CD4-positive, alpha-beta T cell (primary cell): ENCODE measurements at regions of chr1 and their contacts with region 1.

Region 1: GRCh38 chr1:109493805-109494539 is at the start of gene CYB561D1:
- DNase-seq: peak; percentile 78 to 94 (median 88)
- ATAC-seq: peak; percentile 90
- H3K4me3 ChIP-seq: peak within 1 kb of the TSS; percentile 100
- H3K4me3 Mint-ChIP-seq: peak within 1 kb of the TSS; percentile 97
- H3K27ac ChIP-seq: peak within 1 kb of the TSS; percentile 59 to 66
- H3K27ac Mint-ChIP-seq: peak within 1 kb of the TSS; percentile 88
- H3K4me1 ChIP-seq: peaks cover 62% of the 10 kb centered on the region
- H3K4me1 Mint-ChIP-seq: peaks cover 54% of the 10 kb centered on the region
- H3K27me3 ChIP-seq: no peaks in the 10 kb centered on the region
- H3K27me3 Mint-ChIP-seq: no peaks in the 10 kb centered on the region
- CTCF ChIP-seq: peak; percentile 92
- total RNA-seq, gene CYB561D1: 12.0 to 15.0 TPM

Region 2: DNA sequence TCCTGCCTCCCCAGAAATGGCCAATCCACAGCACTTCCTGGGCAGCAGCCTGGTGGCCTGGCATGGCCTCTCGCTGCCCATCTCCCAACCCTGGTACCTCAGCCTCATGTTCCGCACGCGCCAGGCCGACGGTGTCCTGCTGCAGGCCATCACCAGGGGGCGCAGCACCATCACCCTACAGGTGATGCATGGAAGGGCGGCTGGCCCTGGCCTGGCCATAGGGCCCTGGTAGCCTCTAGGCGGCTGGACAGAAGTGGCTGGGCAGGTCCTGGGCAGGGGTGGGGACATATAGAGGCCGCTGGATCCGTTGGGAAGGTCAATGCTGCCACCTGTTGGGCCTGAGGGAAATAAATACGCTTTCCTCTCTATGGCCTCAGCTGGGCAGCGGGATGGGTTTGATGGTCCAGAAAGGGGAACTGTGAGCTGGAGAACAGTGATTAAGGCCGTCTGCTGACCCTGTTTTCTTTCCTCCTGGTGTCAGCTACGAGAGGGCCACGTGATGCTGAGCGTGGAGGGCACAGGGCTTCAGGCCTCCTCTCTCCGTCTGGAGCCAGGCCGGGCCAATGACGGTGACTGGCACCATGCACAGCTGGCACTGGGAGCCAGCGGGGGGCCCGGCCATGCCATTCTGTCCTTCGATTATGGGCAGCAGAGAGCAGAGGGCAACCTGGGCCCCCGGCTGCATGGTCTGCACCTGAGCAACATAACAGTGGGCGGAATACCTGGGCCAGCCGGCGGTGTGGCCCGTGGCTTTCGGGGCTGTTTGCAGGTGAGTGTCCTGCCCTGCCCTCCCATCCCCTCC is 230.2 kb before region 1 on chr1:
- CTCF ChIA-PET with region 1: no interaction called
- POLR2A ChIA-PET with region 1: no interaction called
- intact Hi-C with region 1: loop called in 1 of 2 experiments (anchors 5 kb)
- DNase-seq: peak; percentile 62 to 87 (median 71)
- ATAC-seq: peak; percentile 97
- H3K4me3 ChIP-seq: no peak overlapping the region
- H3K4me3 Mint-ChIP-seq: no peak overlapping the region
- H3K27ac ChIP-seq: no peak overlapping the region
- H3K27ac Mint-ChIP-seq: no peak overlapping the region
- H3K4me1 ChIP-seq: peaks cover 6% of the 10 kb centered on the region
- H3K4me1 Mint-ChIP-seq: no peaks in the 10 kb centered on the region
- H3K27me3 ChIP-seq: no peaks in the 10 kb centered on the region
- H3K27me3 Mint-ChIP-seq: no peaks in the 10 kb centered on the region
- CTCF ChIP-seq: peak; percentile 83

Region 3: GRCh38 chr1:109282952-109283747 is 210.8 kb before region 1 on chr1 and contains the start of gene PSRC1:
- CTCF ChIA-PET with region 1: interaction called, 6 read pairs
- POLR2A ChIA-PET with region 1: no interaction called
- intact Hi-C with region 1: loop called in 1 of 2 experiments (anchors 2 kb)
- DNase-seq: peak; percentile 81 to 94 (median 85)
- ATAC-seq: peak; percentile 93
- H3K4me3 ChIP-seq: peak within 1 kb of the TSS; percentile 70
- H3K4me3 Mint-ChIP-seq: peak within 1 kb of the TSS; percentile 94
- H3K27ac ChIP-seq: peak within 1 kb of the TSS; percentile 31 to 59
- H3K27ac Mint-ChIP-seq: peak within 1 kb of the TSS; percentile 78
- H3K4me1 ChIP-seq: peaks cover 27% of the 10 kb centered on the region
- H3K4me1 Mint-ChIP-seq: peaks cover 19% of the 10 kb centered on the region
- H3K27me3 ChIP-seq: no peaks in the 10 kb centered on the region
- H3K27me3 Mint-ChIP-seq: no peaks in the 10 kb centered on the region
- CTCF ChIP-seq: peak; percentile 71
- total RNA-seq, gene PSRC1: 0.22 to 0.91 TPM

Region 4: GRCh38 chr1:109426278-109427170 is 67.4 kb before region 1 on chr1 and contains the start of gene PSMA5:
- CTCF ChIA-PET with region 1: interaction called, 9 read pairs
- POLR2A ChIA-PET with region 1: interaction called, 15 read pairs
- intact Hi-C with region 1: no loop called
- DNase-seq: peak; percentile 87 to 99 (median 92)
- ATAC-seq: peak; percentile 91
- H3K4me3 ChIP-seq: peak within 1 kb of the TSS; percentile 98
- H3K4me3 Mint-ChIP-seq: peak within 1 kb of the TSS; percentile 98
- H3K27ac ChIP-seq: peak within 1 kb of the TSS; percentile 91 to 95
- H3K27ac Mint-ChIP-seq: peak within 1 kb of the TSS; percentile 98
- H3K4me1 ChIP-seq: peaks cover 33% of the 10 kb centered on the region
- H3K4me1 Mint-ChIP-seq: peaks cover 52% of the 10 kb centered on the region
- H3K27me3 ChIP-seq: no peaks in the 10 kb centered on the region
- H3K27me3 Mint-ChIP-seq: no peaks in the 10 kb centered on the region
- CTCF ChIP-seq: no peak
- total RNA-seq, gene PSMA5: 29.8 to 33.8 TPM

Region 5: GRCh38 chr1:109509176-109510134 is 15.5 kb after region 1 on chr1 and contains the start of gene AMIGO1:
- CTCF ChIA-PET with region 1: interaction called, 54 read pairs
- POLR2A ChIA-PET with region 1: interaction called, 44 read pairs
- intact Hi-C with region 1: loop called in 1 of 2 experiments (anchors 2 kb)
- DNase-seq: peak; percentile 32 to 88 (median 64)
- ATAC-seq: peak; percentile 74
- H3K4me3 ChIP-seq: peak within 1 kb of the TSS; percentile 77
- H3K4me3 Mint-ChIP-seq: peak within 1 kb of the TSS; percentile 98
- H3K27ac ChIP-seq: peak within 1 kb of the TSS; percentile 40 to 54
- H3K27ac Mint-ChIP-seq: peak within 1 kb of the TSS; percentile 96
- H3K4me1 ChIP-seq: peaks cover 57% of the 10 kb centered on the region
- H3K4me1 Mint-ChIP-seq: peaks cover 71% of the 10 kb centered on the region
- H3K27me3 ChIP-seq: no peaks in the 10 kb centered on the region
- H3K27me3 Mint-ChIP-seq: no peaks in the 10 kb centered on the region
- CTCF ChIP-seq: no peak
- total RNA-seq, gene AMIGO1: 16.9 TPM

Region 6: DNA sequence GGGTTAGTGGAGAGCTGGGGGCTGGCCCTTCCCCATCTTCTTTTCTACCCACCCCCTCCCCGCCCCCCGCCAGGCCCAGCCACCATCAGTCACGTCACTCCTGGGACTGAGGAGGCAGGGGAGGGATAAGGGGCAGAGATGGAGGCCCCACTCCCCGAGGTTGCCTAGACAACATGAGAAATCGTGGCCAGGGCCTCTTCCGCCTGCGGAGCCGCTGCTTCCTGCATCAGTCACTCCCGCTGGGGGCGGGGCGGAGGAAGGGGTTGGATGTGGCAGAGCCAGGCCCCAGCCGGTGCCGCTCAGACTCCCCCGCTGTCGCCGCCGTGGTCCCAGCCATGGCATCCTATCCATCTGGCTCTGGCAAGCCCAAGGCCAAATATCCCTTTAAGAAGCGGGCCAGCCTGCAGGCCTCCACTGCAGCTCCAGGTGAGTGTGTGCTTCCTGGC is 126.9 kb after region 1 on chr1:
- CTCF ChIA-PET with region 1: interaction called, 3 read pairs
- POLR2A ChIA-PET with region 1: no interaction called
- intact Hi-C with region 1: loop called in 1 of 2 experiments (anchors 5 kb)
- DNase-seq: peak; percentile 91 to 99 (median 97)
- ATAC-seq: peak; percentile 86
- H3K4me3 ChIP-seq: peak overlapping the region; percentile 91
- H3K4me3 Mint-ChIP-seq: peak overlapping the region; percentile 99
- H3K27ac ChIP-seq: peak overlapping the region; percentile 85 to 95
- H3K27ac Mint-ChIP-seq: peak overlapping the region; percentile 89
- H3K4me1 ChIP-seq: peaks cover 80% of the 10 kb centered on the region
- H3K4me1 Mint-ChIP-seq: peaks cover 82% of the 10 kb centered on the region
- H3K27me3 ChIP-seq: no peaks in the 10 kb centered on the region
- H3K27me3 Mint-ChIP-seq: no peaks in the 10 kb centered on the region
- CTCF ChIP-seq: no peak